K562 (cell line): ENCODE measurements at regions of chr10 and their contacts with region 1.

Region 1: DNA sequence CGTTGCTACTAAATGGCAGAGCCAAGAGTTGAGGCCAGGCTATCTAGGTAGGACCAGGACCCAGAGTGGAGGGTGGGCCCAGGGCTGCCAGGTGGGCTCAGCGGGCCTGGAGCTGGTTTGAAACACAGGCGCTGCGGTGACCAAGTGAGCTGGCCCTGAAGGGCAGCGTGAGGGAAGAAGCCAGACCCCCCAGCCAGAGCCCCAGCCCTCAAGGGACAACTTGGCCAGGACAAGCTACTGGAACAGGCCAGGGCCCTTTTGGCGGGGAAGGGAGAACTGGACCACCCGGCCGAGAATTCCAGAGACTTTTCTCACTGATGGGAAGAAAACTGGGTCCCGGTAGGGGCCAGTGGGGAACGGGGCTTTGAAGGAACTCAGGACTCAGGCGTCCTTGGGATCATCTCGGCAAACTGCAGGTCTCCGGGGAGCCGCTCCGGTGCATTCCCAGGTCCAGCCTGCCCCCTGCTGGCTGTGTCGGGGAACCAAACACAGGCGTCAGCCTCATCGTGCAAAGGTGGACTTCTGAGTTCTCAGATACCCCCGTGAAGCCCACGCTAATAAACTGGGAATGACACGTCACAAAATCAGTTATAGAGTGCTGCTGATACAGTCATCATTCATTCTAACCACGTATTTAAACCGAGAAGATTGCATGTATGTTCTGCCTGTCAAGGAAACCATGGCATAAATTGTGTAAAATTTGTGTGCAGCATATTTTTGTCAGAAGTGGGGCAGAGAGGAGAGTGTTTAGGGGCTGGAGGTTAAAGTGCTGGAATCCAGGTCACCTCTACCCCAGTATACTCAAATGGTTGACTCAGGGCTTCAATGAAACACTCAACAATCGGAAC is 76.0 kb upstream of the CPXM2 start:
- DNase-seq: peak; percentile 54 to 74 (median 73)
- ATAC-seq: peak; percentile 90
- H3K4me3 ChIP-seq: no peak overlapping the region
- H3K27ac ChIP-seq: no peak overlapping the region
- H3K4me1 ChIP-seq: no peaks in the 10 kb centered on the region
- H3K27me3 ChIP-seq: peaks cover 0 to 2% of the 10 kb centered on the region in 2 experiments; a peak in 2 of 5 replicates
- CTCF ChIP-seq: peak; percentile 77 to 80 (median 77)
- EP300 ChIP-seq: no peak
- POLR2A ChIP-seq: no peak
- RAD21 ChIP-seq: peak; percentile 83 to 87

Region 2: DNA sequence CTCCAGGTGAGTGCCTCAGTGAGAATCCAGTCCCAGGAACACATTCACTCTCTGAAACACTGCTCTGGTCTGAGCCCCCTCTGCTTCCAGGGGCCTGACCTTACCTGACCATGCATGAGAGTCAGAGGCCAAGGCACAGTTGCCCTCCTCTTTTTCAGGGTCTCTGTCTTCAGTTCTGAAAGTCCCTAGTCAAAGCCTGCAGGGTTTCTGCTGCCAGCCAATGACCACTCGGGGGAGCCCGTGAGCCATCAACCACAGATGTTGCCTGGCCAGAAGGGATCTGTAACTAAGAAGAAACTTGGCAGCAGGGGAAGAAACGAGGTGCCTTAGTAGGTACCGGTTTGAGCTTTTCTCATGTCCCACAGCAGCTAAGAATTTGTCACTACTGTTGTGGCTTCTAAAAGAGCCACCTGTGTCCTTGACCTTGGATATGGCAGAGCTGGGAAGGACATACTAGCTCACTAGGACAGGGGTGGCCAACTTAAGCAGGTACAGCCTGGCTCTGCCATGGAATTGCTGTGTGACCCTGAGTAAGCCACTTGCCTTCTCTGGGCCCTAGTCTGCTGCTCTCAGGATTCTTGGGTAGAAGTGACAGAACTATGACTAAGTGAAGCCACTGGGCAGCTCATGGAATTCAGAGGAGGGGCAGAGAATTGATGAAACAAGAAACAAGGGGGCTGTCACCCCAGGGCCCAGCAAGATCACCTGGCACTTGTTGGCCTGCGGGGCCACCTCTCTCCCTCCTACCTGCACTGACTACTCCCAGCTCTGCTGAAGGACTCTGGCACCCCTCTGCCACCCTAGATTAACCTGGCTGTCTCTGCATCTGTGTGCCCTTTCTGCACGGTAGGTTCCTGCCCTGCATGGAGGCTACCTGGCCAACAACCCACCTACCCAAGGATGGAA is 385.3 kb before region 1 on chr10:
- CTCF ChIA-PET with region 1: interaction called, 22 read pairs
- POLR2A ChIA-PET with region 1: no interaction called
- in situ Hi-C with region 1: loop called (anchors 5 kb)
- intact Hi-C with region 1: loop called (anchors 1 kb)
- DNase-seq: peak; percentile 54 to 59 (median 57)
- ATAC-seq: peak; percentile 86
- H3K4me3 ChIP-seq: no peak overlapping the region
- H3K27ac ChIP-seq: no peak overlapping the region
- H3K4me1 ChIP-seq: no peaks in the 10 kb centered on the region; a peak in 1 of 5 replicates
- H3K27me3 ChIP-seq: peaks cover 0 to 17% of the 10 kb centered on the region in 2 experiments; a peak in 2 of 5 replicates
- CTCF ChIP-seq: peak; percentile 69 to 75 (median 70)
- EP300 ChIP-seq: no peak
- POLR2A ChIP-seq: no peak
- RAD21 ChIP-seq: peak; percentile 47 to 74

Region 3: DNA sequence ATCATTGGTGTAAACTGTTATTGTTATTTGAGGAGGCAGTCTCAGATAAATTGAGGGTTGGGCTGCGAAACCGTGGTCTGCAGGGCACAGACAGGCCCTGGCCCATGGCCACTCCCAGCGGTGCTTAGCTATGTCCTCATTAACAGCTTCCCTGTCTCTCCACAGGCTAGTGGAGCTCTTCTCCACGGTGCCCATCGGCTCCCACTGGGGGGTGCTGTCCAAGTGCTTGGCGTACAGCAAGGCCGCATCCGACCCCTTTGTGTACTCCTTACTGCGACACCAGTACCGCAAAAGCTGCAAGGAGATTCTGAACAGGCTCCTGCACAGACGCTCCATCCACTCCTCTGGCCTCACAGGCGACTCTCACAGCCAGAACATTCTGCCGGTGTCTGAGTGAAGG is 279.9 kb before region 1 on chr10:
- CTCF ChIA-PET with region 1: no interaction called
- POLR2A ChIA-PET with region 1: no interaction called
- in situ Hi-C with region 1: no loop called
- intact Hi-C with region 1: loop called (anchors 10 kb)
- DNase-seq: peak in 2 of 4 experiments; percentile 8 to 9
- ATAC-seq: peak; percentile 72
- H3K4me3 ChIP-seq: no peak overlapping the region
- H3K27ac ChIP-seq: no peak overlapping the region
- H3K4me1 ChIP-seq: no peaks in the 10 kb centered on the region
- H3K27me3 ChIP-seq: peaks cover 0 to 10% of the 10 kb centered on the region in 2 experiments; a peak in 2 of 5 replicates
- CTCF ChIP-seq: peak in 2 of 3 experiments; percentile 26 to 30; a peak in 2 of 6 replicates
- EP300 ChIP-seq: no peak
- POLR2A ChIP-seq: no peak
- RAD21 ChIP-seq: no peak

Region 4: DNA sequence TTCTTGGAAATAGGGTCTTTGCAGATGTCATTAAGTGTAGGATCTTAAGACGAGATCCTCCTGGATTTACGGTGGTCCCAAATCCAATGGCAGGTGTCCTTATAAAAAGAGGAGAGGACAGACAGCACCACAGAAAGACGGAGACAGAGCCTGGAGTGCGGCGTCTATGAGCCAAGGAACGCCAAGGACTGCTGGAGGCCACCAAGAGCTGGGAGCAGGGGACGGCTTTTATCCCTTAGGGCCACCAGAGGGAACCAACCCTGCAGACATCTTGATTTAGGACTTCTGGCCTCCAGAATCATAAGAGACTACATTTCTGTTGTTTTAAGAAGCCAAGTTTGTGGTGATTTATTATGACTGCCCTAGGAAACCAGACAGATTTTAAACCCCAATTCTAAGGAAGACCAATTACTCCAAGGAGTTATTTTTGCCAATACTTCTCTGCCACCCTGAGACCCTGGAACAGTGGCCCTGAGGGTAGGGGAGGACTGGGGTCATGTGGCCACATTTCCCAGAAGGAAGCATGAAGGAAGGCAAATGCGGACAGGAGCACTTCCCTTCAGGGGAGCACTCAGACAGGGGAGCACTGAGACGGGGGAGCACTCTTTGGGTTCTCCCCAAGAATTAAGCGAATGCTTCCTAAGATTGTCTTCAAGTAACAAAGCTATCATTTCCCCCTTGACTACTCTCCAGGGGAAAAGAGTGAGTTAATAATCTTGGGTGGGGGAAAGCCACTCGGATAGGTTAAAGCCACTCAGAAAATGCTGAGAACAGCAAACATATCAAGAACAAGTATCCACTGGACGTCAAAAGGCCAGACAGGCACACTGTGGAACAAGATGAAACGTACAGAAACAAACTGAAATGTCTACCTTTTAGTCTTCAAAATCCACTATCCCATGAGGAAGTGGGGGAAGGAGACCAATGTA is 58.3 kb after region 1 on chr10:
- CTCF ChIA-PET with region 1: no interaction called
- POLR2A ChIA-PET with region 1: no interaction called
- in situ Hi-C with region 1: no loop called
- intact Hi-C with region 1: no loop called
- DNase-seq: peak in 3 of 4 experiments; percentile 10 to 12 (median 12)
- ATAC-seq: peak; percentile 70
- H3K4me3 ChIP-seq: no peak overlapping the region
- H3K27ac ChIP-seq: no peak overlapping the region
- H3K4me1 ChIP-seq: no peaks in the 10 kb centered on the region
- H3K27me3 ChIP-seq: peaks cover 10 to 62% of the 10 kb centered on the region in 2 experiments; a peak in 4 of 5 replicates
- CTCF ChIP-seq: peak; percentile 31 to 45 (median 39); a peak in 4 of 6 replicates
- EP300 ChIP-seq: no peak
- POLR2A ChIP-seq: no peak
- RAD21 ChIP-seq: peak; percentile 38 to 51; a peak in 3 of 4 replicates